Activated CD4-positive, alpha-beta T cell treated with anti-CD3 and anti-CD28 coated beads, Interleukin-2, amount 10 ng/mL, durations not matched to agents 24 days and 14 days (primary cell): ENCODE measurements at regions of chr3 and their contacts with region 1.

Region 1: GRCh38 chr3:97971677-97972567 is at the start of gene RIOX2:
- DNase-seq: peak; percentile 94
- H3K4me3 Mint-ChIP-seq: peak within 1 kb of the TSS; percentile 94
- H3K27ac Mint-ChIP-seq: peak within 1 kb of the TSS; percentile 99
- H3K4me1 Mint-ChIP-seq: peaks cover 76% of the 10 kb centered on the region
- H3K27me3 Mint-ChIP-seq: no peaks in the 10 kb centered on the region
- total RNA-seq, gene RIOX2: 84.1 and 87.7 TPM in 2 replicates

Region 2: GRCh38 chr3:97764407-97765238 is 207.3 kb before region 1 on chr3 and contains the start of gene ARL6:
- intact Hi-C with region 1: loop called (anchors 1 kb)
- DNase-seq: peak; percentile 92
- H3K4me3 Mint-ChIP-seq: peak within 1 kb of the TSS; percentile 99
- H3K27ac Mint-ChIP-seq: peak within 1 kb of the TSS; percentile 97
- H3K4me1 Mint-ChIP-seq: peaks cover 21% of the 10 kb centered on the region
- H3K27me3 Mint-ChIP-seq: peaks cover 5% of the 10 kb centered on the region
- total RNA-seq, gene ARL6: 6.1 and 6.3 TPM in 2 replicates

Region 3: DNA sequence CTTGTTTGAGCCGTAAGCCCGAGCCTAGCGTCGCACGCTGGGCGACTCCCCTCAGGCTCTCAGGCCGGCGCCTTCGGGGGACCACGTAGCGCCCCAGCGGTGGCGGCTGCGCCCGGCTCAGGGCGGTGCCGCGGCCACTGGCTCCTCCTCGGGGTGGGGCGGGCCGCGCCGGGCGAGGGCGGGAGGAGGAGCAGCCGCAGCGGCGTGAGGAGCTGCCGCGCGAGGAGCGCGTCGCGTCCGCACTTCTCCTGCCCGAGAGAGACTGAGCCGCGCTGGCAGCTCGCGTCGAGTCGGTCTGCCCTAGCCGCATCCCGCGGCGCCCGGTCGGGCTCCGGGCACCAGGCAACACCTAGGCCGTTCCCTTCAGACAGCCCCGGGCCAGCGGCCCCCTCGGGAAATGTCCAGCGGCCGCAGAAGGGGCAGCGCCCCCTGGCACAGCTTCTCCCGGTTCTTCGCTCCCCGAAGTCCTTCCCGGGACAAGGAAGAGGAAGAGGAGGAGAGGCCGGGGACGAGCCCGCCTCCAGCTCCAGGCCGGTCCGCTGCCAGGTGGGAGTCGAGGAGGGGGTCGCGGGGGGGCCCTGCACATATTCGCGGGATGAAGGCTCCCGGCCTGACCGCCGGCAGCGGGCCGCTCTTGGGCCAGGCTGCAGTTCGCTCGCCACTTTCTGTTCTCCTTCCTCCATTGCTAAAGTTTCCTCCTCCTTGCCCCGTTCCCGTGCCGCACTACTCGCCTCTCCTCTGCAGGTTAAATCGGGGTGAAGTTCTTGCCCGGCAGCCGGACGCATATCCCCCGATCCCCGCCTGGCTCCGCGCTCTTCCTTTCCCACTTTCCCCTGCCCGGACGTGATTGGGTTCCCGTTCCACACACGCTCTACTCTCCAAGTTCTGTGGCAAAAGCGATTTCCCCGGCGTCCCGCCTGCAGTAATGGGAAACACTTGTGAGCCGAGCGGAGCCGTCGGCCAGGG is 149.8 kb before region 1 on chr3 and contains the start of gene CRYBG3:
- intact Hi-C with region 1: loop called (anchors 1 kb)
- DNase-seq: peak; percentile 97
- H3K4me3 Mint-ChIP-seq: peak within 1 kb of the TSS; percentile 99
- H3K27ac Mint-ChIP-seq: peak within 1 kb of the TSS; percentile 95
- H3K4me1 Mint-ChIP-seq: peaks cover 32% of the 10 kb centered on the region
- H3K27me3 Mint-ChIP-seq: peaks cover 33% of the 10 kb centered on the region
- total RNA-seq, gene CRYBG3: 8.1 and 8.3 TPM in 2 replicates

Region 4: GRCh38 chr3:97952280-97952679 is 19.6 kb before region 1 on chr3:
- intact Hi-C with region 1: loop called (anchors 2 kb)
- DNase-seq: no peak
- H3K4me3 Mint-ChIP-seq: no peak overlapping the region
- H3K27ac Mint-ChIP-seq: peak overlapping the region; percentile 5
- H3K4me1 Mint-ChIP-seq: peaks cover 15% of the 10 kb centered on the region
- H3K27me3 Mint-ChIP-seq: no peaks in the 10 kb centered on the region

Region 5: GRCh38 chr3:98022978-98023820 is 51.3 kb after region 1 on chr3:
- intact Hi-C with region 1: loop called (anchors 2 kb)
- DNase-seq: peak; percentile 97
- H3K4me3 Mint-ChIP-seq: peak overlapping the region; percentile 13
- H3K27ac Mint-ChIP-seq: peak overlapping the region; percentile 25
- H3K4me1 Mint-ChIP-seq: peaks cover 16% of the 10 kb centered on the region
- H3K27me3 Mint-ChIP-seq: no peaks in the 10 kb centered on the region